Right ventricle myocardium superior (tissue), 1 donor: ENCODE measurements at regions of chr14 and their contacts with region 1.

Region 1: DNA sequence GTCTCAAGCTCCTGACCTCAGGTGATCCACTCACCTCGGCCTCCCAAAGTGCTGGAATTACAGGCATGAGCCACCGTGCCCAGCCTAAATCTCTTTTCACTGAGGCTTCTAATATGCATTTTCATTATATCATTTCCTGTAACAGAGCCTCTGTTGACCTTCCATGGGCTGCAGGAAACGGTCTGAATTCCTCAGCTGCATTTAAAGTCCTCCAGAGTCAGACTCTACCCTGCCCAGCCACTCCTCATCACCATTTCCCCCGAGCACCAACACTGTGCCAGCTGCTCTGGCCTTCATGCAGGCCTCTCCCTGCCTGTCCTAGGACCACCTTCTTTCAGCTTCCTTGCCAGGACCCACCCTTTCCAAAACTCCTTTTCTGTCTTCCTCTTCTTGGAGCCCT is 9.8 kb upstream of the NFKBIA start:
- DNase-seq: no peak
- ATAC-seq: no peak

Region 2: DNA sequence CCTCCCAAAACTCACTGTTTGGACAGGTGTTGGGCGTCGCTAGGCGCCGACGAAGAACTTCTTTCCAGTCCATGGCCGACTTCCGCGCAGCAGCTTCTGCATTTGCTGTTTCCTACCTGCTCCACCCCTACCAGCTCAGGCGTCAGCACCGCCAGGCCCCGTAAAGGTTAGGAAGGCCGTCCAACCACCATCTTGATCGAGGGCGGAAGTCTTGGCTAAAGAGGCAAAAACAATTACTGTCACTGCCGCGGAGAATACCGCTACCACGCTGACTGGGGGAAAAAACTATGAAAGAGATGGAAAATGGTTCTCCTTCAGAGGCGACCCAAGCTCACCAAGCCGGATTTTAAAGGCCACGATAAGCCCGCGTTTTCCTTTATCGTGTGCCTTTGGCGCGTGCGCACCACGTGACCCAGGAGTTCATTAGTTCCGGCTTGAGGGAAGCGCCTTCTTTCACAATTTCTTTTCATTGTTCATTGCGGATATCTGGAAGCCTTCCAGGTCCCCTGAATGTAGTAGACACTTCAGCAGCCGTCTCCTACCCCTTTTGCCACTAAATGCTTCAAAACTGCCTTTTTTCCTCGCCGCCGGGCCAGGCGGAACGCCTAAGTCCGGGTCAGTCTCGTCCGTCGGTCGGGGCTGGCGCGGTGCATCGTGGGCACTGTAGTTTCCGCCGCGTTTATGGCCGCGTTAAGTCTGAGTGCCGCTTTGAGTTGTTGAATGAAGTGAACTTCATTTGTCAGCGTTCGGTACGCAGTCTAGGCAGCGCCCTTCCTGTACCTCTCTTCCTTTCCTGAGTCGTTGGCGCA is 292.3 kb before region 1 on chr14 and contains the starts of genes PPP2R3C and PRORP:
- intact Hi-C with region 1: loop called (anchors 5 kb)
- DNase-seq: peak; percentile 94
- ATAC-seq: peak; percentile 97
- total RNA-seq, gene PPP2R3C: 25.1 TPM
- total RNA-seq, gene PRORP: 17.7 TPM

Region 3: DNA sequence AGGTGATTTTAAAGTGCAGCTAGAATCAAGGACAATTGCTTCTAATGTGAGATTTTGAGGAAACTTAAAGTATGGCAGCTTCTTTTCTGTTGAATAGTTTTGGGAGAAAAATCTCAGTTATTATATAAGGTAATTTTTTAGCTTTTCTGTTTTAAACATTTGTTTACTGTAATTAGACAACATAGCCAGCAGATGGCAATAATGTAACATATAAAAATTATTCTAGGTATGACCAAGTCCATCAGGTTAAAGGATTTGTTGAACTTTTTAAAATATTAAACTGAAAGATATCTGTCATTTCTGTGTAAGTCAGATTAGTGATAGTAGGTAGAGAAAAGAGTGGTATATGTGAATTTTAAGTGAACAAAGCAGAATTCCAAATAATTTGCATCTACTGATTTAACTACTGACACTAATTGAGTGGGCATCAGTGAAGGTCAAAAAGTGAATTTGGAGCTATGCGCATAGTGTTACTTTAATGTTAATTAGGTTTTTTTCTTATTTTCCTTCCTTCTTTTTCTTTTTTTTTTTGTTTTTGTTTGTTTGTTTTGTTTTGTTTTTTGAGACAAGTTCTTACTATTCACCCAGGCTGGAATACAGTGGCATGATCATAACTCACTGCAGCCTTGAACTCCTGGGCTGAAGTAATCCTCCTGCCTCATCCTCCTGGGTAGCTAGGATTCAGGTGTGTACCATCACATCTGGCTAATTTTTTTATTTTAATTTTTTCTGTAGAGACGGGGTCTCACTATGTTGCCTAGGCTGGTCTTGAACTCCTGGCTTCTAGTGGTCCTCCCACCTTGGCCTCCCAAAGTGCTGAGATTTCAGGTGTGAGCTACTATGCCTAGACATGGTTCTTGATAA is 273.4 kb before region 1 on chr14:
- intact Hi-C with region 1: loop called (anchors 5 kb)
- DNase-seq: no peak
- ATAC-seq: no peak

Region 4: GRCh38 chr14:35301735-35302528 is 112.4 kb before region 1 on chr14:
- intact Hi-C with region 1: no loop called
- DNase-seq: no peak
- ATAC-seq: no peak

Region 5: GRCh38 chr14:35519986-35520385 is 105.6 kb after region 1 on chr14:
- intact Hi-C with region 1: no loop called
- DNase-seq: no peak
- ATAC-seq: no peak

Region 6: GRCh38 chr14:35741345-35742031 is 327.1 kb after region 1 on chr14:
- intact Hi-C with region 1: no loop called
- DNase-seq: no peak
- ATAC-seq: no peak